PC-3 (cell line): ENCODE measurements at regions of chr4 and their contacts with region 1.

Region 1: DNA sequence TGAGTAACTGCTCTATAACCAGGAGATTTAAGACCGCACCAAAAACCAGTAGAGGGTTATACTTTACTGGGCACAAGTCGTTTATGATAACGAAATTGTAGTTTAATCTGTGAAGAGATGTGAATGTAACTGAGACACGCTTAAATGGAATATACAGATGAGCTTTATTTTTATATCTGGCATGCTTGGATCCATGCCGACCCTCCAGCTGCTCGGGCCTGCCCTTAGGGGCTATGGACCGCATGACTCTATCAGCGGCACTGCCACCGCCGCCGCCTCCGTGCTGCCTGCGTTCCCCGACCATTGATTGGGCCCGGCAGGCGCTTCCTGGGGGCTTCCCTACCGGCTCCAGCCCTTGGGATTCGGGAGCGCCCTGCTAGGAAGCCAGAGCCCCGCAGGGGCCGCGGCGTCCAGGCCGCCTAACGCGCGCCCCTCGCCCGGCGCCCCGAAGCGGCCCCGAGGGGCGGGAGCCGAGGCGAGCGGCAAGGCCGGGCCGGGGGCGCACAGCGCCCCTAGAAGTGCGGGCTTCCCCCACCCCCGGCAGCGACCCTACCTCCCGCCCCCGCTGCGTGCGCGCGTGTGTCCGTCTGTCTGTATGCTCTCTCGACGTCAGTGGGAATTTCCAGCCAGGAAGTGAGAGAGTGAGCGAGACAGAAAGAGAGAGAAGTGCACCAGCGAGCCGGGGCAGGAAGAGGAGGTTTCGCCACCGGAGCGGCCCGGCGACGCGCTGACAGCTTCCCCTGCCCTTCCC is at the start of gene NFKB1:
- DNase-seq: peak; percentile 61
- ATAC-seq: peak; percentile 66
- H3K4me3 ChIP-seq: peak within 1 kb of the TSS; percentile 97
- H3K27ac ChIP-seq: peak within 1 kb of the TSS; percentile 88
- H3K4me1 ChIP-seq: peaks cover 22% of the 10 kb centered on the region
- H3K27me3 ChIP-seq: no peaks in the 10 kb centered on the region
- CTCF ChIP-seq: no peak
- total RNA-seq, gene NFKB1: 22.2 and 22.4 TPM in 2 replicates

Region 2: GRCh38 chr4:102064747-102065442 is 436.0 kb before region 1 on chr4:
- CTCF ChIA-PET with region 1: no interaction called
- POLR2A ChIA-PET with region 1: no interaction called
- intact Hi-C with region 1: no loop called
- DNase-seq: no peak
- ATAC-seq: no peak
- H3K4me3 ChIP-seq: no peak overlapping the region
- H3K27ac ChIP-seq: no peak overlapping the region
- H3K4me1 ChIP-seq: no peaks in the 10 kb centered on the region
- H3K27me3 ChIP-seq: no peaks in the 10 kb centered on the region
- CTCF ChIP-seq: no peak

Region 3: DNA sequence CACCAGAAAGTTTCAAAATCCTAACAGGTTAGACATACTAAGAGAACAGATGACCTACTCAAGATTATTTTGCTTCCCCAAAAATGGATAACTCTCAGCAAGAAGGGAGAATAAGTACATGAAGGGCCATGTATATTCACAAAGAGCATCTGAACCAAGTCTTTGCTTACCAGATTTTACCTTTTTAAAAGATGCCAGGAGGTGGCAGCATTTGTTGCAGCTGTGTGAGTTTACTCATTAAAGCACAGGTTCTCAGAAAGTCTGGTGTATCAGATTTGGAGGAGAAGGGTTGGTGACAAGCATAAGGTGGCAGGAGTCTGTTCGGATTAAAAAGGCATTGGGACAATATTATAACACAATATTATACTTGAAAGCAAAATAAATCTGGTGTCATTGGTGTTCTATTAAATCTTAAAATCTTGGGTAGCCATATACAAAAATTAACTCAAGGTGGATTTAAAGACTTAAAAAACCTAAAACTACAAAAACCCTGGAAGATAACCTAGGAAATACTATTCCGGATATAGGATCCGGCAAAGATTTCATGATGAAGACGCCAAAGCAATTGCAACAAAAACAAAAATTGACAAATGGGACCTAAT is 51.0 kb before region 1 on chr4:
- CTCF ChIA-PET with region 1: no interaction called
- POLR2A ChIA-PET with region 1: no interaction called
- intact Hi-C with region 1: loop called (anchors 2 kb)
- DNase-seq: peak; percentile 73
- ATAC-seq: peak; percentile 71
- H3K4me3 ChIP-seq: no peak overlapping the region
- H3K27ac ChIP-seq: no peak overlapping the region
- H3K4me1 ChIP-seq: no peaks in the 10 kb centered on the region
- H3K27me3 ChIP-seq: no peaks in the 10 kb centered on the region
- CTCF ChIP-seq: peak; percentile 75

Region 4: DNA sequence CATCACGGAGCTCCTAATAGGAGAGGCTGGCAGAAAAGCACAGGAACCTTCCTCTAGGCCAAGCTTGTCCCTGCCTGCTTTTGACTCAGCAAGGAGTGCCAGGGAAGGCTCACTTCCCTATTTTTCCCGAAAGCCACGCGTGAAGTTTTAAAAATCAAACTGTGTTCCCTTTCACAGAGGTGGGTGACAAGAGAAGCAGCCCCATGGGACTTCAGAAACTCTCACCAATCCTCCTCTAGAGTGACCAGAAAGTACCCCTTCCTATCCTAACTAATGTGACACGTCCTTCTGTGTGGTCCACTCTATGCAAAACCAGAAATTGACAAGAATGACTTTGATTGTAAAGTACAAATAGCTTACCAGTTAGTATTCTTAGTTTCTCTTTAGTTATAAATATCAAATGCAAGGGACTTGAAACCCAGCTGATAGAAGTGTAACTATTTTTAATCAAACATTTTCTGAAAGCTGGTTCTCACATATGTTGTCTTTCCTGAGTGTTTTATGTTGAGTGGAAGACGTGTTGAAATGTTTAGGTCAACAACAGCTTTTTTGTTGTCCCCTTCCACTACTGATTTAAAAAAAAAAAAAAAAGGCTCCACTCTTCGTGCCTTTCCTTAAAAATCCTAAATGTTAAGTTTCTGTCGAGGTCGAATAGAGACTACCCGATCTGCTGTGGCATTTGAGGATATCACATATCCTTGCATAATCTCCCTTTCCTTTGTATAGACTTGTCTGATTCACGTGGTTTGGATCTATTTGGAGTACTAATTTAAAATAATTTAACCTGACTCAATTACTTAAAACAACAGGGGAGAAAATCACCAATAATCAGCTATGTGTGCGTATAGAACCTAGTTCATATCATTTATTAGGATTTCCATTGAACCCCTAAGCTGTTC is 42.4 kb after region 1 on chr4:
- CTCF ChIA-PET with region 1: no interaction called
- POLR2A ChIA-PET with region 1: no interaction called
- intact Hi-C with region 1: loop called (anchors 5 kb)
- DNase-seq: no peak
- ATAC-seq: no peak
- H3K4me3 ChIP-seq: no peak overlapping the region
- H3K27ac ChIP-seq: no peak overlapping the region
- H3K4me1 ChIP-seq: no peaks in the 10 kb centered on the region
- H3K27me3 ChIP-seq: no peaks in the 10 kb centered on the region
- CTCF ChIP-seq: no peak

Region 5: GRCh38 chr4:102578819-102579218 is 77.9 kb after region 1 on chr4:
- CTCF ChIA-PET with region 1: no interaction called
- POLR2A ChIA-PET with region 1: no interaction called
- intact Hi-C with region 1: loop called (anchors 5 kb)
- DNase-seq: no peak
- ATAC-seq: no peak
- H3K4me3 ChIP-seq: no peak overlapping the region
- H3K27ac ChIP-seq: no peak overlapping the region
- H3K4me1 ChIP-seq: peaks cover 46% of the 10 kb centered on the region
- H3K27me3 ChIP-seq: no peaks in the 10 kb centered on the region
- CTCF ChIP-seq: peak; percentile 22; the same call in 1 of the 2 replicates

Region 6: GRCh38 chr4:102598086-102598761 is 97.4 kb after region 1 on chr4:
- CTCF ChIA-PET with region 1: no interaction called
- POLR2A ChIA-PET with region 1: no interaction called
- intact Hi-C with region 1: loop called (anchors 5 kb)
- DNase-seq: no peak
- ATAC-seq: no peak
- H3K4me3 ChIP-seq: no peak overlapping the region
- H3K27ac ChIP-seq: peak overlapping the region; percentile 52
- H3K4me1 ChIP-seq: peaks cover 49% of the 10 kb centered on the region
- H3K27me3 ChIP-seq: no peaks in the 10 kb centered on the region
- CTCF ChIP-seq: no peak

Region 7: DNA sequence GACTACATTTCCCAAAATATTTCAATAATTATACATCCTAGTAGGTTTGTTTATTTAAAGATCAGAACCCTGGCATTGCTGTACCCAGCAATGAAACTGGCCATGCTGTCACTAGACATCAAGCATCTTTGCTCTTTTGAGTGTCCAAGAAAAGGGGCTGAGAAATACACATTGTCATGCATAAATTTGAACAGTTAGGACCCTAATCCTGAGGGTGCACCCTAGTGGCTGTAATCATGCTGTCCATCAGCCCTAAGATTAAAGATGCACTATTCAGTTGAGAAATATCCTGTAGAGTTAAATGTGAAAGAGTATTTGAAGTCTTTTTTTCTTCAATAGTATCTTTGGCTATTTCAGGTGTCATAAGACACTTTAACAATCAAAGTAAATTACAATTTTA is 109.1 kb after region 1 on chr4:
- CTCF ChIA-PET with region 1: no interaction called
- POLR2A ChIA-PET with region 1: interaction called, 18 read pairs
- intact Hi-C with region 1: loop called (anchors 5 kb)
- DNase-seq: peak; percentile 22
- ATAC-seq: no peak
- H3K4me3 ChIP-seq: no peak overlapping the region
- H3K27ac ChIP-seq: no peak overlapping the region
- H3K4me1 ChIP-seq: peaks cover 29% of the 10 kb centered on the region
- H3K27me3 ChIP-seq: no peaks in the 10 kb centered on the region
- CTCF ChIP-seq: peak; percentile 52